PC-3 (cell line): ENCODE measurements at regions of chr4 and their contacts with region 1.

Region 1: GRCh38 chr4:55948726-55949474 is at the start of gene CEP135:
- DNase-seq: peak; percentile 96
- ATAC-seq: peak; percentile 76
- H3K4me3 ChIP-seq: peak within 1 kb of the TSS; percentile 81
- H3K27ac ChIP-seq: peak within 1 kb of the TSS; percentile 93
- H3K4me1 ChIP-seq: peaks cover 30% of the 10 kb centered on the region
- H3K27me3 ChIP-seq: no peaks in the 10 kb centered on the region
- CTCF ChIP-seq: peak; percentile 97
- total RNA-seq, gene CEP135: 14.8 and 19.1 TPM in 2 replicates

Region 2: DNA sequence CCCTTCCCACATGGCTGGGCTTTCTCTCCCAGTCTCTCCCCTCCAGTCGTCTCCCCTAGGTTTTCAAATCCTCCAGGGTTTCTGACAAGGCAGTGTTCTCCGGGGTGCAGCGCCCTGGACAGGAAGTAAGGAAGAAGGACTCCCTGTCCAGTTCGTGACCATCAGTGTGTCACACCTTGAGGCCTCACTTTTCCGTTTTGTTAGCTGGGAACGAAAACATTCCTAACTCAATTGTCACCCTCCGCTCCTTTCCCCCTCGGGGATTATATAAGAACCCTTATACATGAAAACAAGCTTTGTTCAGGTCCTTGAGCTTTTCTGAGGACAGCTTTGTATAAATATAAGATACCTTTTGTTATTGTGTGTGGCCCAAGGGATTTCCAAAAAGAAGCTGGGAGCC is 915.6 kb before region 1 on chr4:
- CTCF ChIA-PET with region 1: no interaction called
- POLR2A ChIA-PET with region 1: interaction called, 12 read pairs
- intact Hi-C with region 1: no loop called
- DNase-seq: peak; percentile 87
- ATAC-seq: peak; percentile 79
- H3K4me3 ChIP-seq: peak overlapping the region; percentile 1; the same call in 1 of the 2 replicates
- H3K27ac ChIP-seq: peak overlapping the region; percentile 77
- H3K4me1 ChIP-seq: peaks cover 23% of the 10 kb centered on the region
- H3K27me3 ChIP-seq: no peaks in the 10 kb centered on the region
- CTCF ChIP-seq: no peak

Region 3: DNA sequence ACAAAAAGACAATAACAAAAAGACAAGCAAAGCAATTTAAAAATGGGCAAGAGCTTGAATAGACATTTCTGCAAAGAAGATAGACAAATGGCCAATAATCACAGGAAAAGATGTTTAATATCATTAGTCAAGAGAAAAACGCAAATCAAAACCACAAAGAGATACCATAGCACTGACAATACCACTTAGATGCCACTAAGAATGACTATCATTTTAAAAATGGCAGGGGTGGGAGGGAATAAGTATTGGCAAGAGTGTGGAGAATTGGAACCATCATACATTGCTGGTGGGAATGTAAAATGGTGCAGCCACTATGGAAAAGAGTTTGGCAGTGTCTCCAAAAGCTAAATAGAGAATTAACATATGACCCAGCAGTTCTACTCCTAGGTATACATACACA is 110.5 kb before region 1 on chr4:
- CTCF ChIA-PET with region 1: no interaction called
- POLR2A ChIA-PET with region 1: interaction called, 15 read pairs
- intact Hi-C with region 1: no loop called
- DNase-seq: no peak
- ATAC-seq: no peak
- H3K4me3 ChIP-seq: no peak overlapping the region
- H3K27ac ChIP-seq: no peak overlapping the region
- H3K4me1 ChIP-seq: peaks cover 4% of the 10 kb centered on the region; the same call in 1 of the 2 replicates
- H3K27me3 ChIP-seq: peaks cover 18% of the 10 kb centered on the region
- CTCF ChIP-seq: no peak

Region 4: DNA sequence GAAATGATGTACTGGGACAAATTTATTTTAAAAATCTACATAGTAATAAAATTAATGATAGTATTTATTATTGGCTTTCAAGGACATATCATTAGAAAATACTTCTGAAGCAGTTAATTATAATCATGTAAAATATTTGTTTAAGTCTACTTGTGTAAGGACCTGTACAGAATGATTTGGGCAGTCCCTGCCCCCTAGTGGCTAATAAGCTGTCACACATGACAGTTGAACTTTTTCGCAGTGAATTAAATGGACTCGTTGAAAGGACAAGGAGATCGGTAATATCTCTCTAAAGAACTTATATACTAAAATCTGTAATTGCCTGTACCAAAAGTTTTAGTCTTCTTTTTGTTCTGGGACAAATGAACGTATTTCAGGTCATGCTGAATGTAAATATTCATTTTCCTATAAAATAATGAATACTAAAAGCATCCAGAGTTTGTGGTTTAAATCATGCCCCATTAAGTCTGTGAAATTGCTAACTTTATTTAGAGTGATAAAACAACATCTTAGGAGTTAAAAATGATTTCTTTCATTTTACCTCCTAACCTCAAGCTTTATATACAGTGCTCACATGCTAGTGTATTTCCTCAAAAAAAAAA is 81.8 kb before region 1 on chr4:
- CTCF ChIA-PET with region 1: no interaction called
- POLR2A ChIA-PET with region 1: interaction called, 5 read pairs
- intact Hi-C with region 1: loop called (anchors 1 kb)
- DNase-seq: peak; percentile 79
- ATAC-seq: peak; percentile 79
- H3K4me3 ChIP-seq: no peak overlapping the region
- H3K27ac ChIP-seq: peak overlapping the region; percentile 41
- H3K4me1 ChIP-seq: peaks cover 28% of the 10 kb centered on the region
- H3K27me3 ChIP-seq: no peaks in the 10 kb centered on the region
- CTCF ChIP-seq: peak; percentile 95

Region 5: GRCh38 chr4:55921093-55921492 is 27.8 kb before region 1 on chr4:
- CTCF ChIA-PET with region 1: no interaction called
- POLR2A ChIA-PET with region 1: interaction called, 3 read pairs
- intact Hi-C with region 1: loop called (anchors 1 kb)
- DNase-seq: peak; percentile 76
- ATAC-seq: peak; percentile 95
- H3K4me3 ChIP-seq: no peak overlapping the region
- H3K27ac ChIP-seq: peak overlapping the region; percentile 23
- H3K4me1 ChIP-seq: peaks cover 17% of the 10 kb centered on the region
- H3K27me3 ChIP-seq: no peaks in the 10 kb centered on the region
- CTCF ChIP-seq: no peak

Region 6: DNA sequence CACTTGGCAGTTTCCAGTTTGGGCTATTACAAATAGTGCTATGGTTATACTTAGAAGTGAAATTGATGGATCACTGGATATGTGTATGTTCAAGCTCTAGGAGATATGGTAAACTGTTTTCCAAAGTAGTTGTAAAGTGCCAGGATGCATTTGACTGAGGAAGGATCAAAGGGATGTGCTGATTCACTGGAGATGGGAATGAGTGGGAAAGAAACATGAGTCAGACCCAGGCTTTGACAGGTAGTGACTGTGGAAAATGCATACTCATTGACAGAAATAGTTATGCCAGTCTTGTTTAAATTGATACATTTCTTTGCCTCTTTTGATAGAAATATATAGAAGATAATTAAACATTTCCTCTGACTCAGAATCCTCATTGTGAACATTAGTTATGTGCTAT is 77.7 kb after region 1 on chr4:
- CTCF ChIA-PET with region 1: no interaction called
- POLR2A ChIA-PET with region 1: no interaction called
- intact Hi-C with region 1: loop called (anchors 5 kb)
- DNase-seq: peak; percentile 68
- ATAC-seq: peak; percentile 77
- H3K4me3 ChIP-seq: no peak overlapping the region
- H3K27ac ChIP-seq: peak overlapping the region; percentile 29
- H3K4me1 ChIP-seq: peaks cover 14% of the 10 kb centered on the region
- H3K27me3 ChIP-seq: no peaks in the 10 kb centered on the region
- CTCF ChIP-seq: no peak

Region 7: DNA sequence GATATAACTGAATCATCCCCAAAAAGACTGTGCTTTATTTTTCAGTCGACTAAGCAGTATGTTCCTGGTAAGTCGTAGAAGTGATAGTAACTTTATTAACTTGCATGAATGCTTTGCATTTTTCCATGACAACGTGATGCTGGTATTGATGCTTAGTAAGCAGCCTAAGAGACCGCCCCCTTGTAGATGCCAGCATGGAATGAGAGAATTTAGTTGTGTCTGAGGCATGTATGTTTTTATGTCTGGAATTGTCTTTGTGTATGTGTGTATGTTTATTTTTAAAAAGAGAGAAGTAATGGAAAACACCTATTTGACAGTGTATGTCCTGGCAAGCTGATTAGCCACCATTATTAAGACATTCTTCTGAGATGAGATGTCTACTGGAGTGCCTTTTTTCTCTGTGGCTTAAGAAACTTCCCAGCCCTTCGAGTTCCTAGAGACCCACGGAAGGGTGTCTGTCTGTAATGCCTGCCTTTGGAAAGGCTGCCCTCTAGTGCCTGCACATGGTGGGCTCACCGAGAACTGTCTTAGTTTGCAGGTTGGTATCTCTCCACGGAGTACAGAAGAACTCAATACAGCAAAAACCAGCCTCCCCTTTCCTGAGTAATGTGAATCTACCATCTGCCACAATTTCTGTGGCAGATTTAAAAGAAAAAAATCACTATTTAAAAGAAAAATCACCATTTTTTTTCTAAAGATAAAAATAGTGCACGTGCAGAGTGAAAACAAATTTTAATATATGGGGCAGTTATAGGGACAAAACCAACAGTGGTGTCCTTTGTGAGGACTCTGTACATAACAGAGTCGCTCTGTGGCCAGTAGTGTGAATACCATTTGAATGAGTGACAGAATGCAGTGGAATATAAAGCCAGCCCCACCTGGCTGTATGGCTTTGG is 352.5 kb after region 1 on chr4:
- CTCF ChIA-PET with region 1: no interaction called
- POLR2A ChIA-PET with region 1: no interaction called
- intact Hi-C with region 1: loop called (anchors 1 kb)
- DNase-seq: peak; percentile 92
- ATAC-seq: peak; percentile 99
- H3K4me3 ChIP-seq: no peak overlapping the region
- H3K27ac ChIP-seq: no peak overlapping the region
- H3K4me1 ChIP-seq: peaks cover 6% of the 10 kb centered on the region; the same call in 1 of the 2 replicates
- H3K27me3 ChIP-seq: no peaks in the 10 kb centered on the region
- CTCF ChIP-seq: peak; percentile 98